ENCODE measurements at regions of chr2 and their contacts with region 1.

Region 1: GRCh38 chr2:202831242-202832220 is 40.0 kb downstream of the ICA1L start:
- DNase-seq: peak; percentile 52 to 72
- ATAC-seq: peak; percentile 99
- H3K4me3 ChIP-seq: no peak overlapping the region
- H3K27ac ChIP-seq: 0 out of 6 replicates have a peak overlapping the region, but pooled peaks of 1 of the 2 experiments have one; percentile 29
- H3K4me1 ChIP-seq: peaks cover 9% of the 10 kb centered on the region
- CTCF ChIP-seq: peak; percentile 91
- EP300 ChIP-seq: no peak
- POLR2A ChIP-seq: no peak
- RAD21 ChIP-seq: peak; percentile 92 to 96

Region 2: GRCh38 chr2:202821206-202822160 is 10.0 kb before region 1 on chr2:
- CTCF ChIA-PET with region 1: interaction called, 10 read pairs
- POLR2A ChIA-PET with region 1: no interaction called
- DNase-seq: no peak
- ATAC-seq: no peak
- H3K4me3 ChIP-seq: no peak overlapping the region
- H3K27ac ChIP-seq: no peak overlapping the region
- H3K4me1 ChIP-seq: no peaks in the 10 kb centered on the region
- CTCF ChIP-seq: no peak
- EP300 ChIP-seq: no peak
- POLR2A ChIP-seq: no peak
- RAD21 ChIP-seq: no peak